OCI-LY7 (cell line): ENCODE measurements at regions of chr6 and their contacts with region 1.

Region 1: GRCh38 chr6:157314705-157315321 is 8.5 kb downstream of the TMEM242 start:
- DNase-seq: peak; percentile 81
- H3K4me3 ChIP-seq: no peak overlapping the region
- H3K27ac ChIP-seq: no peak overlapping the region
- H3K4me1 ChIP-seq: no peaks in the 10 kb centered on the region
- CTCF ChIP-seq: peak; percentile 100

Region 2: DNA sequence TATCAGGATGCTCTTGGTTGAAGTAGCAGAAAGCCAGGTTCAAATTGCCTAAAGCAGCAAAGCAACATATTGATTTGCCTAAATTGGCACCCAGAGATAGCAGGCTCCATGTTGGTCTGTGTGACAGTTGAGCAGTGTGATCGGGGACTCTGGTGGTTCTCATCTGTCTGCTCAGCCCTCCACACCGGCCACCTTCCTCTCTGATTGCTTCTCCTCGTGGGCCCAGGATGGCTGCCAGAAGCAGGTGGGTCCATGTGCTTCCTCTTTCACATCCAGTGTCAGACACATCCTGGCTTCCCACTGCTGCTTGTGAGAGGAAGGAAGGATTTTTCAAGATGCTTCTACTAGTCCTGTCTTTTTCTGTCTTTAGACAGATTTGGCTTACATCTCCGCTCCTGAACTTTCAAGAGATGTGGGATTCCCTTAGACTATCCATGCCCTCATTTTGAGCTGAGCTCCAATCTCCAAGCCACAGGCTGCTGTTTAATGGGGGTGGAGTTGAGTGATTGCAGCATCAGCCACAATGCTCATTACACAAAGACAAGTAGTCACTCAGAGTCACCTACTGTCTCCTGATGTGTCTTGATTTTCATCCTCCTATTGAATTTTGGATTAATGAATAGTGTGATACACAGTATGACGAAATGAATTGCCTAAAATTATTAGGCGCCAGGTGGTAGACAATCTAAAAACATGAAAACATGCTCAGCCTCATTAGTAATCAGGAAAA is 188.4 kb after region 1 on chr6:
- CTCF ChIA-PET with region 1: no interaction called
- POLR2A ChIA-PET with region 1: no interaction called
- intact Hi-C with region 1: loop called (anchors 10 kb)
- DNase-seq: peak; percentile 12
- H3K4me3 ChIP-seq: no peak overlapping the region
- H3K27ac ChIP-seq: no peak overlapping the region
- H3K4me1 ChIP-seq: peaks cover 4% of the 10 kb centered on the region
- CTCF ChIP-seq: no peak

Region 3: DNA sequence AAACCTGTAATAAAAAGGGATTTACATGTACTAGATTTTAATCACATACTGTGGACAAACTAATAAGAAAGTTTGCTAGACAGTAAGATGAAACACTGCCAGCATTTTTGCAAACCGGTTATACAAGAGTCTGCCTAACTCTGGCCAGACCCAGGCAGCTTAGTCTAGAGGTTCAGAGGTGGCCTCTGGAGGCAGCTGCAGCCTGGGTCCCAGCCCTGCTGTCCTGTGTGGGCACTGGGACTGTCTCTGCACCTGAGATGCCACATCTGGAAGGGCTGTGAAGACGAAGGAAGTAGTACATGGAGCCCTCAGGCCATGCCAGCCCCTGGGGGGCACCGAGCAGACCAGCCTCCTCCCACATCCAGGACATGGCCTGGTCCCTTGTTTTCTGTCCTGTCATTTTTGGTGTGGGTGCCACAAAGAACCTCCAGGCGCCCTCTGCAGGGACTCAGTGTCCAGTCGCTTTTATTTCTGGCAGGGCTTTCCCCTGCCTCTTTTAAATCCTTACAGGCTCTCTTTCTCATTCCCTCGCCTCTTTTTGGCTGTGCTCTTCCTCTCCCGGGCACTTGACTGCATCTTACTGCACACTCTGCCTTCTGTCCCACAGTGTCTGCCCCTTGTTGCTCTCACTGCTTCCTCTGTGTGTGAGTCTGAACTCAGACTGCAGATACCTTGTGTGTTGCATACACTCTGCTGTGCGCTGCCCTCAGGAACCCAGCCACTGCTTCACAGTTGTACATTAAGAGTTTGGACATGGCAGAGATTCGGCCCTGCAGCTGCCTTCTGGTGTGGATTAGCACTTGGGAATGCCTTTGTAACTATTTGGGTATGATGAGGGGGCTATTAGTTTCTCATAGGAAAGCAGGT is 282.9 kb after region 1 on chr6:
- CTCF ChIA-PET with region 1: no interaction called
- POLR2A ChIA-PET with region 1: no interaction called
- intact Hi-C with region 1: loop called (anchors 2 kb)
- DNase-seq: peak; percentile 71
- H3K4me3 ChIP-seq: no peak overlapping the region
- H3K27ac ChIP-seq: no peak overlapping the region
- H3K4me1 ChIP-seq: peaks cover 31% of the 10 kb centered on the region
- CTCF ChIP-seq: peak; percentile 79

Region 4: DNA sequence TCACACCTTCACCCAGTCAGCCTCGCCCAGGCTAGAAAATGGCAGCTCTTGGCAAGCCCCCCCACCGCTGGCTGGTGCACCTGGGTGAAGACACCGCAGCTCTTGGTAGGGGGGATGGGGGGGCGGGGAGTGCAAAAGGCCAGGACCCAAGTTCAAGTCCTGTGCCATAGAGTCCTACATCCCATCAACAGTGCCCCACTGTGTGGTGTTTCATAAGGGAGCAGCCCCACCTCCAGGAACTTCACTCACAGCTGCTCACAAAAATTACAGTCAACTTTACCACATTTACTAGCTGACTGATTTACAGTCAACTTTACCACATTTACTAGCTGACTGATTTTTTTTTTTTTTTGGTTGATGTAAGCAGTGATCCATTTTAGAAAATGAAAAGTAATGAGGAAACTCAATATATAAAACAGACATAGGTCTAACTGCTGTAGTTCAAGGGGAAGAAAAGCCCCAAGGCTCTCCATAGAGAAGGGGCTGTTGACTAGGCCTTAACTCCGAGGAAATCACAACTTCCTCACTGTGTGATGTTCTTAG is 299.3 kb after region 1 on chr6:
- CTCF ChIA-PET with region 1: no interaction called
- POLR2A ChIA-PET with region 1: no interaction called
- intact Hi-C with region 1: loop called (anchors 5 kb)
- DNase-seq: peak; percentile 38
- H3K4me3 ChIP-seq: no peak overlapping the region
- H3K27ac ChIP-seq: no peak overlapping the region
- H3K4me1 ChIP-seq: peaks cover 15% of the 10 kb centered on the region
- CTCF ChIP-seq: peak; percentile 43; the same call in 1 of the 2 replicates

Region 5: GRCh38 chr6:157667211-157668008 is 352.6 kb after region 1 on chr6:
- CTCF ChIA-PET with region 1: interaction called, 3 read pairs
- POLR2A ChIA-PET with region 1: no interaction called
- intact Hi-C with region 1: loop called (anchors 1 kb)
- DNase-seq: peak; percentile 74
- H3K4me3 ChIP-seq: no peak overlapping the region
- H3K27ac ChIP-seq: no peak overlapping the region
- H3K4me1 ChIP-seq: no peaks in the 10 kb centered on the region
- CTCF ChIP-seq: peak; percentile 98

Region 6: GRCh38 chr6:157873735-157874344 is 559.0 kb after region 1 on chr6:
- CTCF ChIA-PET with region 1: no interaction called
- POLR2A ChIA-PET with region 1: no interaction called
- intact Hi-C with region 1: loop called (anchors 5 kb)
- DNase-seq: peak; percentile 78
- H3K4me3 ChIP-seq: no peak overlapping the region
- H3K27ac ChIP-seq: no peak overlapping the region
- H3K4me1 ChIP-seq: no peaks in the 10 kb centered on the region
- CTCF ChIP-seq: peak; percentile 94